Adrenal gland (tissue), 19 donors: ENCODE measurements at regions of chr9 and their contacts with region 1.

Region 1: GRCh38 chr9:70427161-70427945 is 12.9 kb upstream of the KLF9 start:
- DNase-seq: no peak
- H3K4me3 ChIP-seq: no peak overlapping the region
- H3K27ac ChIP-seq: no peak overlapping the region
- H3K4me1 ChIP-seq: peaks cover 0 to 3% of the 10 kb centered on the region in 2 donors
- H3K27me3 ChIP-seq: no peaks in the 10 kb centered on the region
- CTCF ChIP-seq: no peak
- POLR2A ChIP-seq: no peak

Region 2: DNA sequence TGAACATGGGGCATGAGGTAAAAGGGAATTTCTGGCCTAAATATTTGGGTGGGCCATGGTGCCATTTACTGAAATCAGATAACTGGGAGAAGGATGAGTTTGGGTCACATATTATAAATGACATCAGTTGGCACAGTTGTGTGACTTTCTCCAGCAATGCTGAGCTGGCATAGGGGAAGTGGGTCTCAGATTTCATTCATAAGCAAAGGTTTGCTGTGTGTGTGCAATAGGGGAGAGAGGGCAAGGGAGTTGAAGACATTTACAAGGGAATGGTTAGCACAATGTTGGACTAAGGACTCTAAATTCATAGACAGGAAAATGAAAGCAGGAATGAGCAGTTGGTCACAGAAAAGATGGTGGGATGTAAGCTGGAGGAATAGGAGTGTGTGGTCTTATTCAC is 34.9 kb after region 1 on chr9:
- intact Hi-C with region 1: loop called in 1 of 2 experiments (anchors 5 kb)
- DNase-seq: no peak
- H3K4me3 ChIP-seq: no peak overlapping the region
- H3K27ac ChIP-seq: no peak overlapping the region
- H3K4me1 ChIP-seq: no peaks in the 10 kb centered on the region
- H3K27me3 ChIP-seq: no peaks in the 10 kb centered on the region
- CTCF ChIP-seq: no peak
- POLR2A ChIP-seq: no peak

Region 3: GRCh38 chr9:70472268-70473249 is 45.2 kb after region 1 on chr9:
- intact Hi-C with region 1: no loop called
- DNase-seq: no peak
- H3K4me3 ChIP-seq: no peak overlapping the region
- H3K27ac ChIP-seq: peak overlapping the region in 1 of 5 donors; percentile 0
- H3K4me1 ChIP-seq: peaks cover 11 to 18% of the 10 kb centered on the region in 2 donors
- H3K27me3 ChIP-seq: no peaks in the 10 kb centered on the region
- CTCF ChIP-seq: no peak
- POLR2A ChIP-seq: no peak